Heart right ventricle (tissue), 16 donors: ENCODE measurements at regions of chr7 and their contacts with region 1.

Region 1: GRCh38 chr7:116236020-116236630 is 25.8 kb downstream of the TES start:
- DNase-seq: peak in 1 of 2 donors; percentile 61
- ATAC-seq: peak in 7 of 8 donors; percentile 43 to 74 (median 65)
- H3K4me3 ChIP-seq: no peak overlapping the region
- H3K27ac ChIP-seq: no peak overlapping the region
- H3K4me1 ChIP-seq: peaks cover 0 to 31% (median 16%) of the 10 kb centered on the region in 9 donors
- H3K27me3 ChIP-seq: no peaks in the 10 kb centered on the region
- CTCF ChIP-seq: peak; percentile 15 to 79 (median 63)

Region 2: DNA sequence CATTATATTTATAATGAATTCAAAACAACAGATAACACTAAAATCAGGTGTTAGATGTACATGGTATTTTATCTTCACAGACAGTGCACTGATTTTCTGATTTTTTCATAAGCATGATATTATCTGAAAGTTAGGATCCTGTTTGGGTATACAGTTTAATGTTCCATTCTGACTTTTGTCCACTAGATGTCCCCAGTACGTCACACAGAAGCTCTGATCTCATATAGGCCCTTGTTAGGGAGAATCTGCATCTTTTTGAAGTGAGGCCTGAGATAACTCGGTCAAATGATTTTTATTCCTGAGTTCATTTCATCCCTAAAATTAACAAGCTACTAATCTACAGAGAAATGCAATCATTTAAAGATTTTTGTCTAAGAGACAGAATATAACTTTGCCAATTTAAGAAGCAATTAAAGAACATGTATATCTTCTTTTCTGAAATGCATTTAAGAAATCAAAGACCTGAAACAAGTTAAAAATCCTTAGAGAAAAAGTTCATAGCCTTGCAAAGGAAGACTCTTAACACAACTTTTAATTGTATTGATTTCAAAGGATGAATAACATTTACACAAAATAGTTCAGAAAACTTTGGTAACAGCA is 97.8 kb before region 1 on chr7:
- intact Hi-C with region 1: loop called in 2 of 10 experiments (anchors 2 to 5 kb)
- DNase-seq: peak in 1 of 2 donors; percentile 19
- ATAC-seq: peak in 7 of 8 donors; percentile 51 to 87 (median 80)
- H3K4me3 ChIP-seq: no peak overlapping the region
- H3K27ac ChIP-seq: no peak overlapping the region
- H3K4me1 ChIP-seq: peaks cover 0 to 19% (median 0%) of the 10 kb centered on the region in 9 donors
- H3K27me3 ChIP-seq: no peaks in the 10 kb centered on the region
- CTCF ChIP-seq: peak; percentile 52 to 87 (median 79)

Region 3: DNA sequence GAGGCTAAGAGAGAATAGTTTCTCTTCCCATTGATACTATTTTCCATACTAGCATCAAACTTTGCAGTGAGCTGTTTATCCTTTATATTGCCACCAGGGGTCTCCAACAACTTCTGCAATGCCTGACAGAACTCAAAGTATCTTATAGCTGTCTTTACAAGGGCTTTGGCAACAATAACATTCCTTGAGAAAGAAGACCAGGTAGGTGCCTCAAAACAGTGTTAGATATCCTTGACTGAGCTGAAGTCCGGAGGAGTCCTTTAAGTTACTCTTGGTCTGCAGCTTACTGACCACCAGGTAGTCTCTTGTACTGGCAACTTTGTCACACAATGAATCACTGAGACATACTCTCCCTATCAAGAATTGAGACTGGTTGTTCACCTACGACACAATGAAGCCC is 55.8 kb before region 1 on chr7:
- intact Hi-C with region 1: loop called (anchors 1 to 5 kb)
- DNase-seq: peak in 1 of 2 donors; percentile 14
- ATAC-seq: peak in 6 of 8 donors; percentile 42 to 78 (median 58)
- H3K4me3 ChIP-seq: no peak overlapping the region
- H3K27ac ChIP-seq: no peak overlapping the region
- H3K4me1 ChIP-seq: no peaks in the 10 kb centered on the region
- H3K27me3 ChIP-seq: no peaks in the 10 kb centered on the region
- CTCF ChIP-seq: peak; percentile 61 to 88 (median 79)